CD8-positive, alpha-beta T cell (primary cell): ENCODE measurements at regions of chr2 and their contacts with region 1.

Region 1: GRCh38 chr2:103805746-103806145 is 1043.9 kb downstream of the TMEM182 start:
- DNase-seq: no peak
- ATAC-seq: no peak
- H3K4me3 ChIP-seq: no peak overlapping the region
- H3K4me3 Mint-ChIP-seq: no peak overlapping the region
- H3K27ac ChIP-seq: no peak overlapping the region
- H3K27ac Mint-ChIP-seq: no peak overlapping the region
- H3K4me1 ChIP-seq: no peaks in the 10 kb centered on the region
- H3K4me1 Mint-ChIP-seq: no peaks in the 10 kb centered on the region
- H3K27me3 ChIP-seq: no peaks in the 10 kb centered on the region
- H3K27me3 Mint-ChIP-seq: no peaks in the 10 kb centered on the region
- CTCF ChIP-seq: no peak

Region 2: GRCh38 chr2:103860016-103860415 is 54.3 kb after region 1 on chr2:
- CTCF ChIA-PET with region 1: no interaction called
- POLR2A ChIA-PET with region 1: no interaction called
- intact Hi-C with region 1: loop called in 1 of 2 experiments (anchors 2 kb)
- DNase-seq: no peak
- ATAC-seq: no peak
- H3K4me3 ChIP-seq: no peak overlapping the region
- H3K4me3 Mint-ChIP-seq: no peak overlapping the region
- H3K27ac ChIP-seq: no peak overlapping the region
- H3K27ac Mint-ChIP-seq: no peak overlapping the region
- H3K4me1 ChIP-seq: no peaks in the 10 kb centered on the region
- H3K4me1 Mint-ChIP-seq: no peaks in the 10 kb centered on the region
- H3K27me3 ChIP-seq: no peaks in the 10 kb centered on the region
- H3K27me3 Mint-ChIP-seq: no peaks in the 10 kb centered on the region
- CTCF ChIP-seq: no peak